H1 (cell line): ENCODE measurements at regions of chr13 and their contacts with region 1.

Region 1: DNA sequence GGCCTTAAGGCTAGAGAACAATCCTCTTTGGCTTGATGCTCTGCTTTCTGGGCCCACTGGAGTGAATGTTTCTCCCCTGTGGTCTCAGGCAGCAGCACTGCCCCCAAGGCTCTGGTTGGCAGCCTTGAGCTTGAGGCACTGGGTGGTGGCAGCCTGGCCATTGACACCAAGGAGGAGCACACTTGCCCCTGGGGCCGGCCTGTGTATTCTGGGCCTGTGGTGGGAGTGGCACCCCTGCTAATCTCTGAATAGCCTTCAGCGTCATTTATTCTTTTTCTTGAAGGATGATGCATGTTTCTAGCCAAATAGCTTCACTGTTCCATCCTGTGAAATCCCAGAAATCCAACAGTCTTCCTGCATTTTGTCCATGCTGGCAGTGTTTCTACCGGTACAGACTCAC is 191.4 kb downstream of the OLFM4 start:
- DNase-seq: no peak
- H3K4me3 ChIP-seq: no peak overlapping the region
- H3K27ac ChIP-seq: no peak overlapping the region
- H3K4me1 ChIP-seq: no peaks in the 10 kb centered on the region
- H3K27me3 ChIP-seq: no peaks in the 10 kb centered on the region
- CTCF ChIP-seq: no peak
- EP300 ChIP-seq: no peak
- POLR2A ChIP-seq: no peak
- RAD21 ChIP-seq: no peak

Region 2: DNA sequence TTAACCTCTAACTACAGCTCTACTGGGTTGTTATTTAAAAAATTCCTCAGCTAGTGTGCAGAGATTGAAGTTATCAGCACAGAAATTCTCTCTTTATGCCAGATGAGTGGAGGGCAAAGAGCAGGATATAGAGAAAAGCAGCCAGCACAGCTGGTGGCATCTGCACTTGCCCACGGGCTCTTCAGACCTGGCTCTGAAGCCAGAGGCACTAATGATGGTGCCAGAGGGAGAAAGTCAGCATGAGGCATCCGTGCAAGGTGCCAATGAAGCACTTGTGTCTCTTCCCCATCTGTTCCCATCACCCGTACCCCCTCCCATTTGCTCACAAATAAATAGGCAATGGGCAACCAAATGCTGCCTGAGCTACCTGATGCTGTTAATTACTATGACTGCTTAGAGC is 52.5 kb before region 1 on chr13:
- CTCF ChIA-PET with region 1: no interaction called
- POLR2A ChIA-PET with region 1: no interaction called
- DNase-seq: no peak
- H3K4me3 ChIP-seq: no peak overlapping the region
- H3K27ac ChIP-seq: no peak overlapping the region
- H3K4me1 ChIP-seq: peaks cover 0 to 6% (median 0%) of the 10 kb centered on the region in 4 experiments; a peak in 1 of 7 replicates
- H3K27me3 ChIP-seq: no peaks in the 10 kb centered on the region
- CTCF ChIP-seq: no peak
- EP300 ChIP-seq: no peak
- POLR2A ChIP-seq: no peak
- RAD21 ChIP-seq: no peak

Region 3: GRCh38 chr13:53206455-53206854 is 13.6 kb before region 1 on chr13:
- CTCF ChIA-PET with region 1: interaction called, 15 read pairs
- POLR2A ChIA-PET with region 1: no interaction called
- DNase-seq: no peak
- H3K4me3 ChIP-seq: no peak overlapping the region
- H3K27ac ChIP-seq: no peak overlapping the region
- H3K4me1 ChIP-seq: peaks cover 0 to 3% (median under 1%) of the 10 kb centered on the region in 4 experiments; a peak in 2 of 7 replicates
- H3K27me3 ChIP-seq: peaks cover 6 to 14% (median 13%) of the 10 kb centered on the region in 4 experiments
- CTCF ChIP-seq: peak in 2 of 3 experiments; percentile 43 to 47; a peak in 2 of 4 replicates
- EP300 ChIP-seq: no peak
- POLR2A ChIP-seq: no peak
- RAD21 ChIP-seq: peak; percentile 53 to 62

Region 4: GRCh38 chr13:53556521-53556920 is 336.5 kb after region 1 on chr13:
- CTCF ChIA-PET with region 1: no interaction called
- POLR2A ChIA-PET with region 1: no interaction called
- DNase-seq: no peak
- H3K4me3 ChIP-seq: no peak overlapping the region
- H3K27ac ChIP-seq: no peak overlapping the region
- H3K4me1 ChIP-seq: no peaks in the 10 kb centered on the region
- H3K27me3 ChIP-seq: no peaks in the 10 kb centered on the region
- CTCF ChIP-seq: no peak
- EP300 ChIP-seq: no peak
- POLR2A ChIP-seq: no peak
- RAD21 ChIP-seq: no peak